Sciatic nerve (tissue), 2 donors: ENCODE measurements at regions of chr5 and their contacts with region 1.

Region 1: DNA sequence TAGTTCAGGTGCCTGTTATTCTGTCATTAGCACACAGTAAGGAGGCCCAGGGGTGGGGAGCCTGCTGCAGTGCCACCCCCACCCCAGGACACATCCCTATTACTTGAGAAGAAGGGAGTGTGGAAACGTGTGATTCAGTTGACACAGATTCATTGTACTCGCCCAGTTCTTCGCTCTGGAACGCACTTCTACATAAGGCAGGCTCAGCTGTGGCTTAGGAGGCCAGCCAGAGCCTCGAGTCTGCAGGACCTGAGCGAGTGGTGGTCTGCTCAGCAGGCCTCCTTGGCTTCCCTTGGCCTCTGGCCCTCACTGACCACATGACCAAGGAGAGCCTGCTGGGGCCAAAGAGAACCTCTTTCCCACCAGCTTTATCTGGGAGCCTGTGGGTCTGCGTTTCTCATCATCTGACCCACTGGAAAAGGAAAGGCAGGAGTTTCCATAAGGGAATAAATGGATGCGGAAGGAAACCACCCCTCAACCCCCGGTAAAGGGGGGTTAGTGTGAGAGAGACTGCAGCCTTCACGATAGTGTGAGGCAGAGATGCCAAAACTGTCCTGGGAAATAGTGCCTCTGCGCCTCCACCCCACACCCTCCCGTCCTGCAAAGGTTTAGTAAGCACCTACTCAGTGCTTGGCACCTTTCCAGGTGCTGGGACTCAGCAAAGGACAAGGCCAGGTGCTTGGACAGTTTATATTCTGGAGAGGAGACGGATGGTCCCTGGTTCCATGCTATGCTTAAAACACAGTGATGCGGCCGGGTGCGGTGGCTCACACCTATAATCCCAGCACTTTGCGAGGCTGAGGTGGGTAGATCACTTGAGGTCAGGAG is 73.7 kb downstream of the PPARGC1B start:
- DNase-seq: no peak
- ATAC-seq: no peak

Region 2: GRCh38 chr5:149731639-149732323 is 72.1 kb before region 1 on chr5:
- intact Hi-C with region 1: loop called (anchors 10 kb)
- DNase-seq: peak; percentile 88
- ATAC-seq: peak; percentile 69